B cell (primary cell): ENCODE measurements at regions of chr19 and their contacts with region 1.

Region 1: GRCh38 chr19:12806239-12807081 is at the start of gene RNASEH2A:
- DNase-seq: peak; percentile 93
- ATAC-seq: peak; percentile 95
- H3K4me3 ChIP-seq: peak within 1 kb of the TSS; percentile 51 to 82 (median 73)
- H3K4me3 Mint-ChIP-seq: peak within 1 kb of the TSS; percentile 96
- H3K27ac ChIP-seq: peak within 1 kb of the TSS; percentile 36 to 61
- H3K27ac Mint-ChIP-seq: peak within 1 kb of the TSS; percentile 87
- H3K4me1 ChIP-seq: peaks cover 14 to 23% of the 10 kb centered on the region in 2 donors
- H3K4me1 Mint-ChIP-seq: peaks cover 25% of the 10 kb centered on the region
- H3K27me3 ChIP-seq: no peaks in the 10 kb centered on the region
- H3K27me3 Mint-ChIP-seq: peaks cover 3% of the 10 kb centered on the region
- CTCF ChIP-seq: no peak
- total RNA-seq, gene RNASEH2A: 16.9 and 18.9 TPM in 2 replicates

Region 2: DNA sequence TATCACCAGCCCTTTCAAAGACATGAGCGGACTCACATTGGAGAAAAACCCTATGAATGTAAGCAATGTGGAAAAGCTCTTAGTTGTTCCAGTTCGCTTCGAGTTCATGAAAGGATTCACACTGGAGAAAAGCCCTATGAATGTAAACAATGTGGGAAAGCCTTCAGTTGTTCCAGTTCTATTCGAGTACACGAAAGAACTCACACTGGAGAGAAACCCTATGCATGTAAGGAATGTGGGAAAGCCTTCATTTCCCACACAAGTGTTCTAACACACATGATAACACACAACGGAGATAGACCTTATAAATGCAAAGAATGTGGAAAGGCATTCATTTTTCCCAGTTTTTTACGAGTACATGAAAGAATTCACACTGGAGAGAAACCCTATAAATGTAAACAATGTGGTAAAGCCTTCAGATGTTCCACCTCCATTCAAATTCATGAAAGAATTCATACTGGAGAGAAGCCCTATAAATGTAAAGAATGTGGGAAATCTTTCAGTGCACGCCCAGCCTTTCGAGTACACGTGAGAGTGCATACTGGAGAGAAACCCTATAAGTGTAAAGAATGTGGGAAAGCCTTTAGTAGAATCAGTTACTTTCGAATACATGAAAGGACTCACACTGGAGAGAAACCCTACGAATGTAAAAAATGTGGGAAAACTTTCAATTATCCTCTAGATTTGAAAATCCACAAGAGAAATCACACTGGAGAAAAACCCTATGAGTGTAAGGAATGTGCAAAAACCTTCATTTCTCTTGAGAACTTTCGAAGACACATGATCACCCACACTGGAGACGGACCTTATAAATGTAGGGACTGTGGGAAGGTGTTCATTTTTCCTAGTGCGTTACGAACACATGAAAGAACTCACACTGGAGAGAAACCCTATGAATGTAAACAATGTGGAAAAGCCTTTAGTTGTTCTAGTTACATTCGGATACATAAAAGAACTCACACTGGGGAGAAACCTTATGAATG is 178.1 kb before region 1 on chr19:
- CTCF ChIA-PET with region 1: no interaction called
- POLR2A ChIA-PET with region 1: no interaction called
- intact Hi-C with region 1: no loop called
- DNase-seq: no peak
- ATAC-seq: no peak
- H3K4me3 ChIP-seq: no peak overlapping the region
- H3K4me3 Mint-ChIP-seq: no peak overlapping the region
- H3K27ac ChIP-seq: no peak overlapping the region
- H3K27ac Mint-ChIP-seq: no peak overlapping the region
- H3K4me1 ChIP-seq: no peaks in the 10 kb centered on the region
- H3K4me1 Mint-ChIP-seq: peaks cover 3% of the 10 kb centered on the region
- H3K27me3 ChIP-seq: no peaks in the 10 kb centered on the region
- H3K27me3 Mint-ChIP-seq: no peaks in the 10 kb centered on the region
- CTCF ChIP-seq: no peak

Region 3: DNA sequence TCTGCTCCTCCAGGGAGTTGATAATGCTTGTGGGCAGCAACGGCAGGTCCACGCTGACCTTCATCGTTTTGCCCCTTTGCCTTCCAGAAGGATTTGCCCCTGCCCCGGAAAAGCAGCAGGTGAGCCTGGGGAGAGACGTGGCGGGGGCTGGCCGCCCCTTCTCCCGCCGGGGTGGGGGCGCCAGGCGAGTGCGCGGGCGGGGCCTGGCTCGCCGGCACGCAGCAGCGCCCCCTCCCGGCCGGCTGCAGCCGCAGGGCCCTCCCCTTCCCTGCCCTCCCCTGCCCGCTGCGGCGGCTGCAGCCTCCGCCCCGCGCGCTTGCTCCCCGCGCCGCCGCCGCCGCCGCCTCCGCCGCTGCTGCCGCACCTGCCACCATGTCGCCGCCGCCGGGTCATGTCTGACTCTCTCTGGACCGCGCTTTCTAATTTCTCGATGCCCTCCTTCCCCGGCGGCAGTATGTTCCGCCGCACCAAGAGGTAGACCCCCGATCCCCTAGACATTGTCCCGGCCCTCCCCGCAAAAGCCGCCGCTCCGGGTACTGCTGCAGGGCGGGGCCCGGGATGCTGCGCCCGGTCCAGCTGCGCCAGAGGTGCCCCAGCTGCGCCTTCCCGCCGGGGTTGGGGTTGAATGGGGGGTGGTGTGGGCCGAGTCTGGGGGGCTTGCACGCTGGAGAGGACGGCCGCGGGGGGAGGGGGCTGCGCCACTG is 31.9 kb after region 1 on chr19 and contains the start of gene MAST1:
- CTCF ChIA-PET with region 1: no interaction called
- POLR2A ChIA-PET with region 1: interaction called, 3 read pairs
- intact Hi-C with region 1: loop called (anchors 2 kb)
- DNase-seq: peak; percentile 74
- ATAC-seq: peak; percentile 72
- H3K4me3 ChIP-seq: peak within 1 kb of the TSS in 3 of 5 experiments; percentile 12 to 57 (median 36)
- H3K4me3 Mint-ChIP-seq: peak within 1 kb of the TSS; percentile 75
- H3K27ac ChIP-seq: no peak within 1 kb of the TSS
- H3K27ac Mint-ChIP-seq: no peak within 1 kb of the TSS
- H3K4me1 ChIP-seq: peaks cover 43 to 56% of the 10 kb centered on the region in 2 donors
- H3K4me1 Mint-ChIP-seq: peaks cover 48% of the 10 kb centered on the region
- H3K27me3 ChIP-seq: peaks cover 6 to 93% (median 57%) of the 10 kb centered on the region in 4 experiments
- H3K27me3 Mint-ChIP-seq: peaks cover 65% of the 10 kb centered on the region
- CTCF ChIP-seq: peak; percentile 63
- total RNA-seq, gene MAST1: 0.39 and 1.2 TPM in 2 replicates